Activated CD8-positive, alpha-beta T cell treated with anti-CD3 and anti-CD28 coated beads, Interleukin-2, amount 10 ng/mL, durations not matched to agents 7 days and 5 days (primary cell): ENCODE measurements at regions of chr1 and their contacts with region 1.

Region 1: GRCh38 chr1:109790735-109791494 is 27.2 kb upstream of the EPS8L3 start:
- DNase-seq: peak; percentile 94
- ATAC-seq: peak; percentile 95
- H3K4me3 Mint-ChIP-seq: peak overlapping the region; percentile 42
- H3K27ac Mint-ChIP-seq: peak overlapping the region; percentile 96
- H3K4me1 Mint-ChIP-seq: peaks cover 91% of the 10 kb centered on the region
- H3K27me3 Mint-ChIP-seq: no peaks in the 10 kb centered on the region

Region 2: GRCh38 chr1:109802901-109803561 is 12.1 kb after region 1 on chr1:
- CTCF ChIA-PET with region 1: interaction called, 96 read pairs
- POLR2A ChIA-PET with region 1: interaction called, 36 read pairs
- DNase-seq: no peak
- ATAC-seq: peak; percentile 2
- H3K4me3 Mint-ChIP-seq: peak overlapping the region; percentile 63
- H3K27ac Mint-ChIP-seq: peak overlapping the region; percentile 95
- H3K4me1 Mint-ChIP-seq: peaks cover 90% of the 10 kb centered on the region
- H3K27me3 Mint-ChIP-seq: no peaks in the 10 kb centered on the region

Region 3: DNA sequence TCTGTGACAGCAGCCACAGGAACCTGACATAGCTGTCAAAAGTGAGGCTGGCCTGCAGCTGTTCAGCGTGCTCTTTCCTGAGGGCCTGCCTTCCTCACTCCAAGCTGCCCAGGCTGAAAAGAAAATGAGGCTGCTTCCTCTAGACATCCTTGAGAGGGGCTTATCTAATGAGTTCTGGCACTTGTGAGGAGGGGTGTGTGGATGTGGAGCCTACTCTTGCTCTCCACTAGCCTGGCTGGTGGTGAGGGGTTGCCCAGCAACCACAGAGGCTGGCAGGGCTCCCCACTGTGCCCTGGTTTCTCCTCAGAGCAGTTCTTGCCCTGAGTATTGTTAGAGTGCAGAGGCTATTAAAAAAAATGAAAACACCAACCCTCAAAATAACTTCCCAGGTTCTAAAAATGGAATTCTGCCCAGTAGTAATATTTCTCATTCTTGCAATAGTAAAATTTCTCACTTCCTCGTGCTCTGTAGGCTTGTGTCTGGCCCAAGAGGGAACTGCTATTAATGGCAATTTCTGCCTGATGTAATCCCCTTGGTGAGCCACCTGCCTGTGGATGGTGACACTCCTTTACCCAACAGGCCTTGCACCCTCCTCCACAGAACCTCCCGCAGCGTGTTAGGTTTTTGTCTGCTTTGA is 25.4 kb after region 1 on chr1:
- CTCF ChIA-PET with region 1: interaction called, 18 read pairs
- POLR2A ChIA-PET with region 1: no interaction called
- DNase-seq: no peak
- ATAC-seq: no peak
- H3K4me3 Mint-ChIP-seq: no peak overlapping the region
- H3K27ac Mint-ChIP-seq: peak overlapping the region; percentile 26
- H3K4me1 Mint-ChIP-seq: peaks cover 45% of the 10 kb centered on the region
- H3K27me3 Mint-ChIP-seq: peaks cover 6% of the 10 kb centered on the region

Region 4: DNA sequence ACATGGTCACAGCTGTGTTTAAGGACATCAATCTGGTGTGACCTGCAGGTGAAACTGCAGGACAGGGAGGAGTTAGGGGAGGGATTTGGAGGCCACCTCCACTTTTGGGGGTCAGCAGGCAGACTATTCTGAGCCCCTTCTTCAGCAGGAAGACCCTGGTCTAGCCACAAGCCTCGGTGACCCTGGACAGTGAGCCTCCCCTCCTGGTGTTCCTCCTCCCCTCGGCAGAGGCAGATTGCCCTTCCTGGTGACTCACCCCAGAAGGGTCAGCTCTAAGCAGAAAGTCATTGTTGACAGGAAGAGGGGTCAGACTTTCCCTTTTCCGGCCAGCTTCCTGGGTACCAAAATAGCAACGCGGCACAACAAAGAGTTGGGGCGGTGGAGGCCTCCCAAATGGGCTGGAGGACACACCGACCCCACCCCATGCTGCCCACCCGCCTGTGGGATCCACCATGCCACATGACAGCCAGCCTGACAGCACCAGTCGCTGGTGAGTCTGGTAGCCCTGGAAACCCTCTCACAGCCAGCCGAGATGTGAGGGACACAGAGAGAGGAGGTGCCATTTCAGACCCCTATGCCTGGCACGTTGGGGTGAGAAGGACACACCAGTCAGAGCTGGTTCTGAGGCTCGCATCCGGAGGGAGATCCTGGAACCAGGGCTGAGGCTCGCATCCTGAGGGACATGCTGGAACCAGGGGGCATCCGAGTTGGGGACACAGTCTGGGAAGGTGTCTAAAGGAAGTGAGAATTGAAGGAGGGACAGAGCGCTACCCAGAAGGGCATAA is 105.0 kb after region 1 on chr1:
- CTCF ChIA-PET with region 1: interaction called, 12 read pairs
- POLR2A ChIA-PET with region 1: interaction called, 3 read pairs
- DNase-seq: peak; percentile 44
- ATAC-seq: peak; percentile 68
- H3K4me3 Mint-ChIP-seq: no peak overlapping the region
- H3K27ac Mint-ChIP-seq: no peak overlapping the region
- H3K4me1 Mint-ChIP-seq: peaks cover 20% of the 10 kb centered on the region
- H3K27me3 Mint-ChIP-seq: no peaks in the 10 kb centered on the region

Region 5: GRCh38 chr1:109910123-109910962 is 119.4 kb after region 1 on chr1 and contains the start of gene CSF1:
- CTCF ChIA-PET with region 1: interaction called, 26 read pairs
- POLR2A ChIA-PET with region 1: interaction called, 12 read pairs
- DNase-seq: peak; percentile 79
- ATAC-seq: peak; percentile 54
- H3K4me3 Mint-ChIP-seq: peak within 1 kb of the TSS; percentile 92
- H3K27ac Mint-ChIP-seq: peak within 1 kb of the TSS; percentile 95
- H3K4me1 Mint-ChIP-seq: peaks cover 83% of the 10 kb centered on the region
- H3K27me3 Mint-ChIP-seq: no peaks in the 10 kb centered on the region
- total RNA-seq, gene CSF1: 40.3 to 41.1 TPM